H1 (cell line): ENCODE measurements at regions of chr2 and their contacts with region 1.

Region 1: DNA sequence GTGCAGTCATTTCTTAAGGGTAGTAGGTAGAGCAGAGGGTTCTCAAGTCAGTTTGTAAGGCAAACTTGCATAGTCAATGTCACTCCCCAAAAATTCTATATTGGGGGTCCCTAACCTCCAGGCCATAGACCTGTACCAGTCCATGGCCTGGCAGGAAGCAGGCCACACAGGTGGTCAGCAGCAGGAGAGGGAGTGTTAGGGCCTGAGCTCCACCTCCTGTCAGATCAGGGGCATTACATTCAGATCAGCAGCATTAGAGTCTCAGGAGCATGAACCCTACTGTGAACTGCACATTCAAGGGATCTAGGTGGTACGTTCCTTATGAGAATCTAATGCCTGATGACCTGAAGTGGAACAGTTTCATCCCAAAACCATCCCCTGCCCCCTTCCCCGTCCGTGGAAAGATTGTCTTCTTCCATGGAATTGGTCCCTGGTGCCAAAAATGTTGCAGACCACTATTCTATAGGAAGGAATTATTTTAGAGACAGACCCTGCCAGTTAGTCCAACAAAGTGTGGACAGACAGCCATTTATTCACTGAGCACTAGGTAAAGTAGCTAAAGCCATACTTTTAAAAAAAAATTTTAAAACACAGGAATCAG is 6.7 kb downstream of the COA5 start:
- DNase-seq: no peak
- H3K4me3 ChIP-seq: no peak overlapping the region
- H3K27ac ChIP-seq: no peak overlapping the region
- H3K4me1 ChIP-seq: 0 out of 7 replicates have a peak, but pooled peaks cover 0 to 2% (median 0%) of the 10 kb centered on the region in 4 experiments
- H3K27me3 ChIP-seq: no peaks in the 10 kb centered on the region
- CTCF ChIP-seq: peak; percentile 69 to 81 (median 70)
- EP300 ChIP-seq: no peak
- POLR2A ChIP-seq: no peak; a peak in 1 of 3 replicates
- RAD21 ChIP-seq: peak; percentile 74 to 82

Region 2: DNA sequence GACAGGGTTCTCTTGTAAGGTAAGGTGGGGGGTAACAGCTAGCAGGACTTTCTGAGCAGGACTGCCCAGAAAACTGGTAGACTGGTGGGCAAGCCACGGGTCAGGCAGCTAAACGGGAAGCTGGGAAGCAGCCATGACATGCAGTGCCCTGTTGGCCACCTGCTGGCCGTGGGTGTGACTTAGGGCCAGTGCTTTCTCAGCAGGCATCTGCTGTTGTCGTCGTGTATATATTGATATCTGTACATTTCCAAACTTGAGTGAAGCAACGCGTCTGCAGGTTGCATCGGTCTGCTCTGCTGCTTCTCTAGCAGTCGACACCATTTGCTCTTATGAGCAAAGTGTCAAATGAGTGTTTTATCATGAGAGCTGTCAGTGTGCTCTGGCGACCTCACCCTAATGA is 24.3 kb before region 1 on chr2:
- CTCF ChIA-PET with region 1: interaction called, 11 read pairs
- POLR2A ChIA-PET with region 1: no interaction called
- DNase-seq: no peak
- H3K4me3 ChIP-seq: no peak overlapping the region
- H3K27ac ChIP-seq: no peak overlapping the region
- H3K4me1 ChIP-seq: no peaks in the 10 kb centered on the region
- H3K27me3 ChIP-seq: no peaks in the 10 kb centered on the region
- CTCF ChIP-seq: peak in 1 of 3 experiments; percentile 8; a peak in 1 of 4 replicates
- EP300 ChIP-seq: no peak
- POLR2A ChIP-seq: no peak
- RAD21 ChIP-seq: no peak